IMR-90 (cell line): ENCODE measurements at regions of chr2 and their contacts with region 1.

Region 1: GRCh38 chr2:88874063-88874657 is 182.7 kb downstream of the RPIA start:
- DNase-seq: peak; percentile 63
- ATAC-seq: peak; percentile 93
- H3K4me3 ChIP-seq: no peak overlapping the region
- H3K27ac ChIP-seq: no peak overlapping the region
- H3K4me1 ChIP-seq: no peaks in the 10 kb centered on the region
- H3K27me3 ChIP-seq: peaks cover 2% of the 10 kb centered on the region
- CTCF ChIP-seq: peak; percentile 79
- POLR2A ChIP-seq: no peak
- RAD21 ChIP-seq: peak; percentile 71

Region 2: DNA sequence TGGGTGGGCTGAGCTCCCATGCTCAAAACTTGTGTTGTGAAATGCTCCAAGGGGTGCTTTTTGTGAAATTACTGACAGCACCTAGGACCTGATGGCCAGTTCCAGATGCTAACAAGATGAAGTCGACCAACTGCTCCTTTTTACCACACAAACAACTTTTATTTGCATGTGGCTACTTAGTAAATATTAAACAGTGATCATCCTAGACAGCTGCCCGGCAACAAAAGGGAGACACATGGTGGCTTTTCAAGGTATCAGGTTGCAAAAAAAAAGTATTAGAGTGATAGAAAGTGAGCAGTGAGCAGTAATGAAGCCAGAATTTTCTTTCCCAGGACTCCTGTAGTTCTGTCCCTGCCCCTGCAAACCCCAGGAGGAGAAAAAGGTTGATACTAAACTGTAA is 64.1 kb before region 1 on chr2:
- CTCF ChIA-PET with region 1: no interaction called
- POLR2A ChIA-PET with region 1: no interaction called
- dilution Hi-C with region 1: no loop called
- in situ Hi-C with region 1: no loop called
- intact Hi-C with region 1: no loop called
- DNase-seq: no peak
- ATAC-seq: no peak
- H3K4me3 ChIP-seq: no peak overlapping the region
- H3K27ac ChIP-seq: no peak overlapping the region
- H3K4me1 ChIP-seq: no peaks in the 10 kb centered on the region
- H3K27me3 ChIP-seq: no peaks in the 10 kb centered on the region
- CTCF ChIP-seq: no peak
- POLR2A ChIP-seq: no peak
- RAD21 ChIP-seq: no peak

Region 3: GRCh38 chr2:88919087-88919738 is 45.1 kb after region 1 on chr2:
- CTCF ChIA-PET with region 1: no interaction called
- POLR2A ChIA-PET with region 1: no interaction called
- dilution Hi-C with region 1: no loop called
- in situ Hi-C with region 1: no loop called
- intact Hi-C with region 1: loop called (anchors 2 kb)
- DNase-seq: peak; percentile 34
- ATAC-seq: peak; percentile 53; the same call in 1 of the 2 replicates
- H3K4me3 ChIP-seq: no peak overlapping the region
- H3K27ac ChIP-seq: no peak overlapping the region
- H3K4me1 ChIP-seq: no peaks in the 10 kb centered on the region
- H3K27me3 ChIP-seq: no peaks in the 10 kb centered on the region
- CTCF ChIP-seq: peak; percentile 69
- POLR2A ChIP-seq: no peak
- RAD21 ChIP-seq: peak; percentile 36

Region 4: GRCh38 chr2:88967844-88968243 is 93.7 kb after region 1 on chr2:
- CTCF ChIA-PET with region 1: no interaction called
- POLR2A ChIA-PET with region 1: no interaction called
- dilution Hi-C with region 1: no loop called
- in situ Hi-C with region 1: no loop called
- intact Hi-C with region 1: no loop called
- DNase-seq: no peak
- ATAC-seq: no peak
- H3K4me3 ChIP-seq: no peak overlapping the region
- H3K27ac ChIP-seq: no peak overlapping the region
- H3K4me1 ChIP-seq: no peaks in the 10 kb centered on the region
- H3K27me3 ChIP-seq: no peaks in the 10 kb centered on the region
- CTCF ChIP-seq: 0 out of 2 replicates have a peak, but pooled peaks have one; percentile 15
- POLR2A ChIP-seq: no peak
- RAD21 ChIP-seq: no peak